ENCODE measurements at regions of chr2 and their contacts with region 1.

Region 1: GRCh38 chr2:69781321-69782248 is 39.7 kb downstream of the ANXA4 start:
- DNase-seq: peak; percentile 67 to 91
- ATAC-seq: peak; percentile 58 to 65
- H3K4me3 ChIP-seq: peak overlapping the region; percentile 7; the same call in 1 of the 3 replicates
- H3K27ac ChIP-seq: peak overlapping the region; percentile 90 to 93
- H3K4me1 ChIP-seq: peaks cover 91% of the 10 kb centered on the region
- CTCF ChIP-seq: no peak
- EP300 ChIP-seq: peak; percentile 96 to 98
- POLR2A ChIP-seq: no peak
- RAD21 ChIP-seq: peak in 1 of 2 experiments; percentile 50; a peak in 2 of 5 replicates

Region 2: GRCh38 chr2:69770193-69771146 is 11.1 kb before region 1 on chr2:
- CTCF ChIA-PET with region 1: interaction called, 10 read pairs
- POLR2A ChIA-PET with region 1: interaction called, 3 read pairs
- DNase-seq: peak; percentile 63 to 77
- ATAC-seq: peak; percentile 71 to 74
- H3K4me3 ChIP-seq: no peak overlapping the region
- H3K27ac ChIP-seq: peak overlapping the region; percentile 90 to 93
- H3K4me1 ChIP-seq: peaks cover 100% of the 10 kb centered on the region
- CTCF ChIP-seq: no peak
- EP300 ChIP-seq: peak in 1 of 2 experiments; percentile 31; a peak in 1 of 5 replicates
- POLR2A ChIP-seq: no peak
- RAD21 ChIP-seq: peak in 1 of 2 experiments; percentile 22; a peak in 1 of 5 replicates

Measured in A549 (cell line).